Right ventricle myocardium inferior (tissue), 1 donor: ENCODE measurements at regions of chr1 and their contacts with region 1.

Region 1: GRCh38 chr1:39446986-39447567 is 44.4 kb upstream of the BMP8A start:
- DNase-seq: no peak
- ATAC-seq: no peak

Region 2: GRCh38 chr1:39282537-39283216 is 164.4 kb before region 1 on chr1:
- intact Hi-C with region 1: no loop called
- DNase-seq: no peak
- ATAC-seq: no peak

Region 3: GRCh38 chr1:39297551-39297950 is 149.5 kb before region 1 on chr1:
- intact Hi-C with region 1: loop called (anchors 5 kb)
- DNase-seq: no peak
- ATAC-seq: no peak

Region 4: GRCh38 chr1:39354572-39354971 is 92.5 kb before region 1 on chr1:
- intact Hi-C with region 1: loop called (anchors 5 kb)
- DNase-seq: no peak
- ATAC-seq: no peak

Region 5: GRCh38 chr1:39609618-39610331 is 162.7 kb after region 1 on chr1:
- intact Hi-C with region 1: no loop called
- DNase-seq: peak; percentile 90
- ATAC-seq: peak; percentile 94